ENCODE measurements at regions of chr15 and their contacts with region 1.

Region 1: DNA sequence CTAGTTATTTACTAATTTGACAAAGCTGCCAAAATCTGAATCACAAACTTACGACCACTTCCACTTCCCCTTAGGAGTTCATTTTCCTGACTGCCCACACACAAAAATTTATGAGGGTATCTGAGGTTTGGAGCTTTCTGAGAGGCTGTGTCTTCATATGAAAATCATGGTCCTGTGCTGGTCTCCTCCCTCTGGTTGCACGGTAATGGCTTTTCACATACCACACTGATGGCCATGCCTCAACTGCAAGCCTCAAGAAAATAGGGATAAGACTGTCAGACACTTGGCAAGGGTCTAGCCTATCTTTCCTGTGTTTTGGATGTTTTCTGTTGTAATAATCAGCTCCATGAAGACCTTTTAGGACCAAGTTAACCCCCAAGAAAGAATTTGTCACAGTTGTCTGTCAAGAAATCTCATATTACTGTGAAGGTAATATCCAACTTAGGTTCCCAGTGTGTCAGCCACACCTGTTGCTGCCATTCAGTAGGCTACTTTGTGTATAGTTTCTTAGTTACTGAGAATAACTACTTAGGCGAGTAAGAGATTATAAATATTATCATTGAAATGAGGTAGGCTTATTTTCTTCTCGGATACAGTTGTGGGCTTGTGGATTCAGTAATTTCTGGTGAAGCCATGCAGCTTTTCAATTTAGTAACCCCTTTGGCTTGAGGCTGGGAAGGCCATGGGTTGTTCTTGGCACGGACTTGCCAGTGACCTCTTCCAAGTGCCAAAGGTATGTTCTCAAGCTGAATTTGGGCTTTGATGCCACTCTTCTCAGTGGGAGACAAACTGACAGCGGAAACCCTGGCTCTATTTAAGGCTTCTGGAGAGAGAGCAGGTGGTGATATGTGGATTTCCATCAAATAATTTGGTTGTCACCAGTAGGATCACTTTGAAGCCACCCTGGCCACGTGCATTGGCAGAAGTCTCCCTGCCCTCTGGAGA is 101.1 kb downstream of the RYR3 start:
- DNase-seq: peak; percentile 69 to 82
- ATAC-seq: peak; percentile 91
- H3K4me3 ChIP-seq: no peak overlapping the region
- H3K27ac ChIP-seq: peak overlapping the region; percentile 82 to 89 (median 86)
- H3K4me1 ChIP-seq: peaks cover 39 to 64% of the 10 kb centered on the region in 2 donors
- H3K27me3 ChIP-seq: no peaks in the 10 kb centered on the region
- CTCF ChIP-seq: no peak
- POLR2A ChIP-seq: no peak

Region 2: GRCh38 chr15:33309602-33310276 is 102.1 kb before region 1 on chr15:
- in situ Hi-C with region 1: no loop called
- intact Hi-C with region 1: loop called (anchors 5 kb)
- DNase-seq: peak in 1 of 2 donors; percentile 54
- ATAC-seq: peak; percentile 60 to 73
- H3K4me3 ChIP-seq: peak overlapping the region in 3 of 4 donors; percentile 50 to 65 (median 60)
- H3K27ac ChIP-seq: peak overlapping the region in 1 of 4 donors; percentile 81
- H3K4me1 ChIP-seq: peaks cover 0 to 17% of the 10 kb centered on the region in 2 donors
- H3K27me3 ChIP-seq: no peaks in the 10 kb centered on the region
- CTCF ChIP-seq: peak; percentile 29 to 63 (median 42)
- POLR2A ChIP-seq: no peak

Region 3: DNA sequence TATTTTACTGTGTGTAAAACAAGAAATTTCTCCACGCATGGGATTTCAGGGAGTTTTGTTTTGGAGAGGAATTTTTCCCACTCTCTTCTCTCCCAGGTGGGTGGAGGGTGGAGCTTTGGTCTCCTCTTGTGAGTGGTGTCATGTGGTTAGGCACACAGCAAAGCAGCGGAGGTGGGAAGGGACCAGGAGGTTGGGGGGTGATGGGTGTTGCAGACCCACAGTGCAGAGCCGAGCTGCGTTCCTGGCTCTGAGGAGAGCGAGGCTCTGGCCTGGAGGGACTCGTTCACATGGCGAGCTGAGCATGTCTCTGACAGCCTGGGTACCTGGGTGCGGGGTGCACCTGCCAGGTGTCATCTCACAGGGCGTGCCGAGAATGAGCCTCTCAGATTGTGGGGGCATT is 13.3 kb before region 1 on chr15:
- in situ Hi-C with region 1: no loop called
- intact Hi-C with region 1: loop called (anchors 1 kb)
- DNase-seq: no peak
- ATAC-seq: no peak
- H3K4me3 ChIP-seq: no peak overlapping the region
- H3K27ac ChIP-seq: no peak overlapping the region
- H3K4me1 ChIP-seq: peaks cover 33 to 42% of the 10 kb centered on the region in 2 donors
- H3K27me3 ChIP-seq: no peaks in the 10 kb centered on the region
- CTCF ChIP-seq: no peak
- POLR2A ChIP-seq: no peak

Region 4: GRCh38 chr15:33467816-33468163 is 55.9 kb after region 1 on chr15:
- in situ Hi-C with region 1: no loop called
- intact Hi-C with region 1: loop called (anchors 1 kb)
- DNase-seq: peak; percentile 23 to 69
- ATAC-seq: peak; percentile 87 to 92
- H3K4me3 ChIP-seq: peak overlapping the region in 1 of 4 donors; percentile 11
- H3K27ac ChIP-seq: peak overlapping the region; percentile 80 to 85 (median 82)
- H3K4me1 ChIP-seq: peaks cover 11 to 16% of the 10 kb centered on the region in 2 donors
- H3K27me3 ChIP-seq: no peaks in the 10 kb centered on the region
- CTCF ChIP-seq: no peak
- POLR2A ChIP-seq: no peak

Region 5: DNA sequence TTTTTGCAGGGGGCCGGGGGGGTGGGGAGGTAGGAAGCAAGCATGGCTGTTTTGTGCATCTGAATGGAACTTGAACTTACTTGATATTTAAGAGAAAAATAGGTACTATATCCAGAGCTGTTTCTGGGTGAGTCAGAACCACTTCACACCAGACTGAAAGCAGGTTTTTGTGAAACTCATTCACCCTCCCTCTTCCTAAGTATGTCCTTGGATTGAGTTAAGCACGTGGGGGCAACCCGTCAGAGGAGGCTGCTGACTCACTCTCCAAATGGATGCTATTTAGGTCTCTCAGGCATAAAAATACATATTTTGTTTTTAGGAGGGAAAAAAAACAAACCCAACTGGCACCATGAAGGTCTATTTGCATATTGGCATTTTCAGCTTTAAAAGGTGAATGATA is 169.2 kb after region 1 on chr15:
- in situ Hi-C with region 1: no loop called
- intact Hi-C with region 1: loop called (anchors 5 kb)
- DNase-seq: no peak
- ATAC-seq: no peak
- H3K4me3 ChIP-seq: no peak overlapping the region
- H3K27ac ChIP-seq: no peak overlapping the region
- H3K4me1 ChIP-seq: no peaks in the 10 kb centered on the region
- H3K27me3 ChIP-seq: no peaks in the 10 kb centered on the region
- CTCF ChIP-seq: no peak
- POLR2A ChIP-seq: no peak

Region 6: DNA sequence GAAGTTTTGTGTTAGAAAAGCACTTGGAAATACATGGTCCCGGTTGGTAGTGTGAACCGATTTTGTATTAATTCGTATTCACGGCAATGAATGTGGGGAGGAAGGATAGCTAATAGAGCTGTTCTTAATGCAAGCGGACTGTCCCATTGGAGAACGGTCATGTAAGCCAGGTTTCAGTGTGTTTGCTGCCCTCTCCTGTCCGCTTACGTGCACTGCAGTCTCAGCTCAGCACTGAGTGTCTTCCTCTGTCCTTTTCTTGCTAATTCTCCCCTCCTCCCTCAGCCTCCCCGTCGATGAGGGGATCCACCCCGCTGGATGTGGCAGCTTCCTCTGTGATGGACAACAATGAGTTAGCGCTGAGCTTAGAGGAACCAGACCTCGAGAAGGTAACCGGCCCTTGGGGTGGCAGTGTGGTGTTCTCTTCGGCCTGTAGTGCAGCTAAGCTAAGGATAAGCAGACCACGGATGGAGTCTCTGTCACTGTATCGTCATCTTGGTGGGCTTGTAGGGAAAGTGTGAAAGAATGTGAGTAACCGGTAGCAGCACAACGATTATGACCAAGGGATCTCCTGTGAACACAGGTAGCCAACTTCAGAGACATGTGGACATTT is 288.9 kb after region 1 on chr15:
- in situ Hi-C with region 1: no loop called
- intact Hi-C with region 1: no loop called
- DNase-seq: peak; percentile 32 to 69
- ATAC-seq: peak; percentile 94 to 96
- H3K4me3 ChIP-seq: no peak overlapping the region
- H3K27ac ChIP-seq: no peak overlapping the region
- H3K4me1 ChIP-seq: peaks cover 6 to 12% of the 10 kb centered on the region in 2 donors
- H3K27me3 ChIP-seq: no peaks in the 10 kb centered on the region
- CTCF ChIP-seq: peak; percentile 71 to 88 (median 86)
- POLR2A ChIP-seq: no peak

Measured in gastrocnemius medialis (tissue), 4 donors.